ENCODE measurements at regions of chr7 and their contacts with region 1.

Region 1: DNA sequence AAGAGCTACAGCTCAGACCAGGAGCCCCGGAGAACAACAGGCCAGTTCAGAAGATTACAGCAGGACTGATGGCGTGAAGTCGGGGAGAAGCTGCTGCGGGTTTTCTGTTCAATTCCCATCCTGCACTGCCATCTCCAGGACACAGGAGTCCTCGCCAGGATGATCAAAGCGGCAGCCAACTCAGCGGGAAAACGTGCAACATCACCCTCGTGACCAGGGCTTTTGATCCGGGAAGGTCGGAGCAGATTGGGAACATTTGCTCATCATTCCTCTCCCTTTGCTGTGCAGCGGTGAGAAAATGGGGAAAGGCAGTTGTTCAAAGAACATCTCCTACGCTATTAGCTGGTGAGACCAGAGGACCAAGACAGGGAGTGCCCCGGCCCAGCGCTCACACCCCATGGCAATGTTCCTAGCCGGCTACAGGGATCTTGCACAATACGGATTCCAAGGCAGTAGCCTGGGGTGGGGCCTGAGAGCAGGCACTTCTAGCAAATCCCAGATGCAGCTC is 50.4 kb upstream of the FOXK1 start:
- DNase-seq: peak; percentile 79
- ATAC-seq: peak; percentile 89
- H3K4me3 ChIP-seq: peak overlapping the region; percentile 54; the same call in 1 of the 2 replicates
- H3K27ac ChIP-seq: 0 out of 2 replicates have a peak overlapping the region, but pooled peaks have one; percentile 17
- H3K4me1 ChIP-seq: peaks cover 6% of the 10 kb centered on the region; the same call in 1 of the 2 replicates
- H3K27me3 ChIP-seq: no peaks in the 10 kb centered on the region
- CTCF ChIP-seq: peak; percentile 77

Region 2: DNA sequence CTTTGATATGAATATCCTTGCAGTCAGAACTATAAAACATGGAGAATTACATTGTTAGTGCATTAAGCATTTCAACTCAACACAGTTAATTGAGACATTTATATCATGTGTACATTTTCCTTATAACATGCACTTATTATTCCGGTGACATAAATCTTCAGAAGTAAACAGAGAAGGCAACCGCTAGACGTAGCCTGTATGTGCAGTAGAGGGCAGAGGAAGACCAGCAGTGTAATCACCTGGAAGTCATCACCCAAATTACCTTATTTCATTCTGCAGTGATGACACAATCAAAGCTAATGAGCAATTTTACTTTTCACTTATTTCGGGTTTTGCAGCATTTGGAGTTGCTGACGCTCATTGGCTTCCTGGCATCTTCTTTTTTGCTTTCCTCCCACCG is 936.1 kb before region 1 on chr7:
- CTCF ChIA-PET with region 1: no interaction called
- POLR2A ChIA-PET with region 1: no interaction called
- intact Hi-C with region 1: loop called (anchors 1 kb)
- DNase-seq: peak; percentile 38
- ATAC-seq: peak; percentile 90
- H3K4me3 ChIP-seq: no peak overlapping the region
- H3K27ac ChIP-seq: no peak overlapping the region
- H3K4me1 ChIP-seq: no peaks in the 10 kb centered on the region
- H3K27me3 ChIP-seq: no peaks in the 10 kb centered on the region
- CTCF ChIP-seq: peak; percentile 77

Region 3: GRCh38 chr7:4610768-4611467 is 20.8 kb before region 1 on chr7:
- CTCF ChIA-PET with region 1: interaction called, 4 read pairs
- POLR2A ChIA-PET with region 1: no interaction called
- intact Hi-C with region 1: loop called (anchors 1 kb)
- DNase-seq: peak; percentile 83
- ATAC-seq: peak; percentile 97
- H3K4me3 ChIP-seq: no peak overlapping the region
- H3K27ac ChIP-seq: no peak overlapping the region
- H3K4me1 ChIP-seq: 0 out of 2 replicates have a peak, but pooled peaks cover 3% of the 10 kb centered on the region
- H3K27me3 ChIP-seq: no peaks in the 10 kb centered on the region
- CTCF ChIP-seq: peak; percentile 78

Region 4: DNA sequence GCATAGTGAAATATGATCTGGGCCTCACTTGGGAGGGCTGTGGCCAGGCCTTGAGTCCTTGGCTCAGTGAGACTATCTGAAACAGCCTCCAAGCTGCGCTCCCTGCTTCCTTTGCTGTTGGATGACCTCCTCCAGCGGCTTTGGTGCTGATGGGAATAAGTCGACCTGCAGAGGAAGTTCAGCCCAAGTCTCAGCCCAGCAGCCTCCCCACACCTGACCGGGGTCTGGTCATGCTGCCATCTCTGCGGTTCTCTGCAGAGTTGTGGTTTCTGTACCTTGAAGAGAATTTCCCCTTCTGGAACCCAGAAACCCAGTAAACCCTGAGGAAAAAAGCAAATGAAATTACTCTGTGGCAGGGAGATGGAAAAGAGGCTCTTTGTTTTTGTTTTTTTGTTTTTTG is 409.3 kb after region 1 on chr7:
- CTCF ChIA-PET with region 1: no interaction called
- POLR2A ChIA-PET with region 1: no interaction called
- intact Hi-C with region 1: no loop called
- DNase-seq: no peak
- ATAC-seq: no peak
- H3K4me3 ChIP-seq: no peak overlapping the region
- H3K27ac ChIP-seq: no peak overlapping the region
- H3K4me1 ChIP-seq: no peaks in the 10 kb centered on the region
- H3K27me3 ChIP-seq: no peaks in the 10 kb centered on the region
- CTCF ChIP-seq: no peak